GM13977 (cell line): ENCODE measurements at regions of chrX and their contacts with region 1.

Region 1: GRCh38 chrX:31658360-31658759 is 586.5 kb upstream of the FTHL17 start:
- DNase-seq: peak; percentile 4
- CTCF ChIP-seq: peak; percentile 58

Region 2: DNA sequence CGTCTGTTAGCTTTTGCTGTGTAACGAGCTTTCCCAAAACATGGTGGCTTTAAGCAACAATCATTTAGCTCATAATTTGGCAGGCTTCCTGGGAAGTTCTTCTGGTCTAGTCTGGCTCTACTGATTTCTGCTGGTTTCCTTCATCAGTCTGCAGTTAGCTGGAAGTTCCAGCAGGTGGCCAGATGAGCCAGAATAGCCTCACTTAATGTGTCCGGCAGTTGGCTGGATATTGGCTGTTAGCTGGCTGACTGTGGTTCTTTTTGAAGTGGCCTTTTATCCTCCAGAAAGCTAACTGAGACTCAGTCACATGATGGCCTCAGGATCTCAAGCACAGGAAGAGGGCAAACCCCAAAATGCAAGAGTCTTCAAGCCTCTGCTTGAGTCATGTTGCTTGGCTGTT is 621.5 kb before region 1 on chrX:
- in situ Hi-C with region 1: loop called (anchors 25 kb)
- DNase-seq: peak; percentile 42
- CTCF ChIP-seq: peak; percentile 75

Region 3: DNA sequence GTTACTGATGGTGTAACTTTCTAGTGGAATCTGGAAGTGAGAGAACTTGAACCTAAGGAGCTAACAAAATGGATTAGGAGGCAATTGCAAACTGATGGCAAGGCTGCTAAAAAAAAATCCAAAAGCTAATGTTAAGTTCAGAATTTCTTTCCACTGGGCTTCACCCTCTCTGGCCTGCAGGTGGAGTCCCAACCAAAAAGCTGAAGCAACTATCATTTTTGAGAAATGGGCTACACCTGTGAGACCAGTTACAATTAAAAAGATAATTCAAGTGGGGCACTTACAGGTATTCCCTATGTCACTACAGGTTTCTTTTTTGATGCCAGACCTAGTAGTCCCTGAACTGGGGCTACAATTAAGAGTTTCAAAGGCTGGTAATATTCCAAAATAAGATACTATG is 444.4 kb before region 1 on chrX:
- in situ Hi-C with region 1: loop called (anchors 25 kb)
- DNase-seq: peak; percentile 28
- CTCF ChIP-seq: peak; percentile 66

Region 4: GRCh38 chrX:31279359-31279758 is 379.0 kb before region 1 on chrX:
- in situ Hi-C with region 1: loop called (anchors 25 kb)
- DNase-seq: no peak
- CTCF ChIP-seq: peak; percentile 30

Region 5: GRCh38 chrX:31376408-31377022 is 281.8 kb before region 1 on chrX:
- in situ Hi-C with region 1: no loop called
- DNase-seq: no peak
- CTCF ChIP-seq: no peak